B cell (primary cell): ENCODE measurements at regions of chr10 and their contacts with region 1.

Region 1: GRCh38 chr10:27558612-27559020 is 54.5 kb downstream of the RAB18 start:
- DNase-seq: peak; percentile 28
- ATAC-seq: no peak
- H3K4me3 ChIP-seq: no peak overlapping the region
- H3K4me3 Mint-ChIP-seq: no peak overlapping the region
- H3K27ac ChIP-seq: no peak overlapping the region
- H3K27ac Mint-ChIP-seq: no peak overlapping the region
- H3K4me1 ChIP-seq: no peaks in the 10 kb centered on the region
- H3K4me1 Mint-ChIP-seq: no peaks in the 10 kb centered on the region
- H3K27me3 ChIP-seq: peaks cover 0 to 3% (median 0%) of the 10 kb centered on the region in 4 experiments
- H3K27me3 Mint-ChIP-seq: peaks cover 13% of the 10 kb centered on the region
- CTCF ChIP-seq: peak; percentile 48

Region 2: DNA sequence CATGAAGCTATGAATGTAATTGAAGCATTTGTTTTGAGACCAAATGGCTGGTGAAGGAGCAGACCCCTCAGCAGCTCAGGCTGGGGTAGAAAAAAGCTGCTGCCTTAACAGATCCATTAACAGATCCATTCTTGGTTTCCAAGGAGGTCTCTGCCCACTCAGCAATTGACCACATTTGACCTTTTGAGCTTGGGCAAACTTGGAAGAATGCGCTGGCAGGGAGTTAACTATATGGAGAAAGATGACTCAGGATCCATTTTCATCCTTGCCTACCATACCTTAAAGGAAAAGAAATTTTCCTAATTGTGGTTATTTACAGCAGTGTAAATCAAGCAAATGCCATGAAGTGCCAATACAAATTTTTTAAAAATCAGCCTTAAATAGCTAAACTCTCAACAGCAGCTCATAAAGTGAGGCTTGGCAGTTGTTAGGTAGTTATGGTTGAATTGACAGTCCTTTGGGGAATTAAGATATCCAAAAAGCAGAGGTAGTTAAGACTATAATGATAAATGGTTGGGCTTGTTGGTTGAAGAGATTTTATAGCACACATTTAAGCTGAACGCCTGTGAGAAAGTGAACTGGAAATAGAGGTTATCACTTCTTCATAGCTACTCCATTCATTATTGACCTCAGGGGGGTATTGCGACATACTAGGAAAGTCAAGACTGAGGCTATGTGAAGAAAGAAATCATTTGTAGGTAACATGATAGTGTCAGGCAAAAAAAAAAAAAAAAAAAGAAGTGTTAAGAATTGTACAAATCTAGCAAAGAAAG is 103.1 kb after region 1 on chr10:
- CTCF ChIA-PET with region 1: interaction called, 3 read pairs
- POLR2A ChIA-PET with region 1: no interaction called
- intact Hi-C with region 1: loop called (anchors 2 kb)
- DNase-seq: no peak
- ATAC-seq: no peak
- H3K4me3 ChIP-seq: no peak overlapping the region
- H3K4me3 Mint-ChIP-seq: no peak overlapping the region
- H3K27ac ChIP-seq: no peak overlapping the region
- H3K27ac Mint-ChIP-seq: no peak overlapping the region
- H3K4me1 ChIP-seq: no peaks in the 10 kb centered on the region
- H3K4me1 Mint-ChIP-seq: no peaks in the 10 kb centered on the region
- H3K27me3 ChIP-seq: peaks cover 0 to 4% (median 0%) of the 10 kb centered on the region in 4 experiments
- H3K27me3 Mint-ChIP-seq: peaks cover 28% of the 10 kb centered on the region
- CTCF ChIP-seq: no peak

Region 3: DNA sequence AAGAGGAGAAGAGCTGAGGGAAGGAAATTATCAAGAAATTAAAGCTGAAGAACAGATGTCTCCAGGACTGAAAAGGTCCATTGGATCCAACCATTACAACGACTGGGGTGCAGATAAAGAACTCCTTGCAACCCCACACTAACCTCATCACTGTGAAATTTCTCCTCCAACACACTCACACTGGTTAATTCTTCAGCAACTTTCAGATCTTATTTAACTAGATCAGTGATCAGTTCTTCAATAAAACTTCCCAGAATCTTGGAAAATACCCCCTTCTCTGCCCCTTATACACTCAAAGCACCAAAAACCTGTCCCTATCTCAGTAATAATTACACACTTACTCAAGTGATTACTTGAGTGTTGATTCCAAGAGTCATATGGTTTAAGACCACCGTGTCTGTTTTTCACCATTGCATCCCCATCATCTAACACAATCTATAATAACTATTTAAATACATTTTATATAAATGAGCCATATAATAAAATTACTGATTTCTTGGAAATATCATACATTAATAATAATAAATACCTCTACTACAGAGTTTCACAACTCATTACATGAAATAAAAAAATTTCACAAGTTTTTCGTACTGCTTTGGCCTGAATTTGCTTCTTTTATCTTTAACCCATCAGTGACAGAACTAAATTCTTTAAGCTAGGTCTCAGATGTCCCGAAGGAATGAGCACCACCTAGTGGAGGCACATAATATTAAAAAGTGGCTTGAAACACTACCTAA is 620.6 kb after region 1 on chr10:
- CTCF ChIA-PET with region 1: interaction called, 6 read pairs
- POLR2A ChIA-PET with region 1: no interaction called
- intact Hi-C with region 1: loop called (anchors 5 kb)
- DNase-seq: peak; percentile 57
- ATAC-seq: no peak
- H3K4me3 ChIP-seq: peak overlapping the region in 1 of 5 experiments; percentile 34
- H3K4me3 Mint-ChIP-seq: no peak overlapping the region
- H3K27ac ChIP-seq: no peak overlapping the region
- H3K27ac Mint-ChIP-seq: no peak overlapping the region
- H3K4me1 ChIP-seq: peaks cover 7 to 14% of the 10 kb centered on the region in 2 donors
- H3K4me1 Mint-ChIP-seq: peaks cover 15% of the 10 kb centered on the region
- H3K27me3 ChIP-seq: no peaks in the 10 kb centered on the region
- H3K27me3 Mint-ChIP-seq: no peaks in the 10 kb centered on the region
- CTCF ChIP-seq: peak; percentile 93

Region 4: GRCh38 chr10:28241741-28242399 is 683.3 kb after region 1 on chr10:
- CTCF ChIA-PET with region 1: interaction called, 3 read pairs
- POLR2A ChIA-PET with region 1: no interaction called
- intact Hi-C with region 1: loop called (anchors 5 kb)
- DNase-seq: peak; percentile 58
- ATAC-seq: peak; percentile 64
- H3K4me3 ChIP-seq: no peak overlapping the region
- H3K4me3 Mint-ChIP-seq: no peak overlapping the region
- H3K27ac ChIP-seq: no peak overlapping the region
- H3K27ac Mint-ChIP-seq: no peak overlapping the region
- H3K4me1 ChIP-seq: no peaks in the 10 kb centered on the region
- H3K4me1 Mint-ChIP-seq: peaks cover 2% of the 10 kb centered on the region
- H3K27me3 ChIP-seq: no peaks in the 10 kb centered on the region
- H3K27me3 Mint-ChIP-seq: peaks cover 22% of the 10 kb centered on the region
- CTCF ChIP-seq: peak; percentile 99